ENCODE measurements at regions of chr18 and their contacts with region 1.

Region 1: DNA sequence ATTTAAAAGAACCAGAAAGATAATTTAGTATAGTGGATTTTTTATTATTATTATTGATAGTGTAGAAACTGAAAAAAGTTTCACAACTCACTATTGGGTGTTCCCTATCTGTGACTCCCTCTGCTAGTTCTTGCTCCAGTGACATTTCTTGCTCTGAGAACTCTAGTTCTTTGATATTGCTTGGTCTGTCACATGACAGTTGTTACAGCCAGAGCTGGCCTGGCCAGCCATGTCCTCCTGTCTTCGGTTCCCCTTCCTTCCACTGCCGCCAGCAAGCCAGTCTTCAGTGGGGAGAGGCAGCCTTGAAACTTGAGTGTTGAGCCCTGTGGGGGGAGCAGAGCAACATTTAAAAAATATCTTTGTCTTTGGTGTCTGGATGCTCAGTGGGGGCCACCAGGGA is 7.6 kb upstream of the THOC1 start:
- DNase-seq: no peak
- H3K4me3 ChIP-seq: no peak overlapping the region
- H3K27ac ChIP-seq: no peak overlapping the region
- H3K4me1 ChIP-seq: no peaks in the 10 kb centered on the region
- CTCF ChIP-seq: no peak

Region 2: DNA sequence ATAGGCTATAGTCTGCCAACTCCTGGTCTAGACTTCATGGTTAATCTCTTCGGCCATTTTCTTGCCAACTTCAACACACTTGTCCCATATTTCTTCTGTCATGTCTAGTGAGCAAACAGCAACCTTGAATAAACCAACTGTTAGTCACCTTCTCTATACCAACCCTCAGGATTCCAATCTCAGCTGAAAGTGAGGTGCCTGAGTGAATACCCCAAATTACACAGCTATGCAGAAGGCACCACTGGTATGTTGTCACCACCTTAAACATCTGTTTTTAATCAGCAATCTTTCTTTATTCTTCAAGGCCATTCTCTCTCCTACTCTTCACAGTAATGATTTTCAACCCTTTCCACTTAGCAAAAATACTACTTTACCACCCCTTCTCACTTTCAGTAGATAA is 46.9 kb before region 1 on chr18:
- CTCF ChIA-PET with region 1: no interaction called
- POLR2A ChIA-PET with region 1: interaction called, 6 read pairs
- intact Hi-C with region 1: loop called (anchors 10 kb)
- DNase-seq: no peak
- H3K4me3 ChIP-seq: no peak overlapping the region
- H3K27ac ChIP-seq: no peak overlapping the region
- H3K4me1 ChIP-seq: no peaks in the 10 kb centered on the region
- CTCF ChIP-seq: no peak

Region 3: DNA sequence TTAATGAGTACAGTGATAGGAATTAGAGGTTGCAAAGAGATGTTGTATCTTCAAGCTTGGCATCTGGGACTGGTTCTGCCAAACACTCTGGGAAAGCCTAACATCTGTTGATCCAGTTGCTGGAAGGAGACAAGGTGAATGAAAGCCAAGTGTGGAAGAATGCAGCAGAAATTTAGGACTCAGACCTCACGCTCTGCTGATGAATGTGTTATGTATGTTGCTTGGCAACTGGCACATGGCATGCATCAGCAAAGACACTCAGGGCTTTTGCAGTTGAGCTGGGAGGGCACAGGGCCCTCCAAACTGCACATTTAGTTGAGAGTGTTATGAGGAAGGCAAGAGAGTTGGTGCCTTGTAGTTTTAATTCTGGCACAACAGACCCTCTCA is 119.5 kb after region 1 on chr18:
- CTCF ChIA-PET with region 1: no interaction called
- POLR2A ChIA-PET with region 1: no interaction called
- intact Hi-C with region 1: no loop called
- DNase-seq: no peak
- H3K4me3 ChIP-seq: no peak overlapping the region
- H3K27ac ChIP-seq: no peak overlapping the region
- H3K4me1 ChIP-seq: no peaks in the 10 kb centered on the region
- CTCF ChIP-seq: no peak

Region 4: GRCh38 chr18:556058-556457 is 280.6 kb after region 1 on chr18:
- CTCF ChIA-PET with region 1: no interaction called
- POLR2A ChIA-PET with region 1: no interaction called
- intact Hi-C with region 1: no loop called
- DNase-seq: no peak
- H3K4me3 ChIP-seq: no peak overlapping the region
- H3K27ac ChIP-seq: no peak overlapping the region
- H3K4me1 ChIP-seq: no peaks in the 10 kb centered on the region
- CTCF ChIP-seq: no peak

Measured in OCI-LY7 (cell line).